ENCODE measurements at regions of chr5 and their contacts with region 1.

Region 1: GRCh38 chr5:141524604-141525597 is 36.0 kb downstream of the PCDHGC5 start:
- DNase-seq: peak; percentile 88
- ATAC-seq: peak; percentile 53
- H3K4me3 ChIP-seq: no peak overlapping the region
- H3K27ac ChIP-seq: peak overlapping the region; percentile 25; the same call in 1 of the 2 replicates
- H3K4me1 ChIP-seq: peaks cover 40% of the 10 kb centered on the region
- H3K27me3 ChIP-seq: no peaks in the 10 kb centered on the region
- CTCF ChIP-seq: peak; percentile 98

Region 2: DNA sequence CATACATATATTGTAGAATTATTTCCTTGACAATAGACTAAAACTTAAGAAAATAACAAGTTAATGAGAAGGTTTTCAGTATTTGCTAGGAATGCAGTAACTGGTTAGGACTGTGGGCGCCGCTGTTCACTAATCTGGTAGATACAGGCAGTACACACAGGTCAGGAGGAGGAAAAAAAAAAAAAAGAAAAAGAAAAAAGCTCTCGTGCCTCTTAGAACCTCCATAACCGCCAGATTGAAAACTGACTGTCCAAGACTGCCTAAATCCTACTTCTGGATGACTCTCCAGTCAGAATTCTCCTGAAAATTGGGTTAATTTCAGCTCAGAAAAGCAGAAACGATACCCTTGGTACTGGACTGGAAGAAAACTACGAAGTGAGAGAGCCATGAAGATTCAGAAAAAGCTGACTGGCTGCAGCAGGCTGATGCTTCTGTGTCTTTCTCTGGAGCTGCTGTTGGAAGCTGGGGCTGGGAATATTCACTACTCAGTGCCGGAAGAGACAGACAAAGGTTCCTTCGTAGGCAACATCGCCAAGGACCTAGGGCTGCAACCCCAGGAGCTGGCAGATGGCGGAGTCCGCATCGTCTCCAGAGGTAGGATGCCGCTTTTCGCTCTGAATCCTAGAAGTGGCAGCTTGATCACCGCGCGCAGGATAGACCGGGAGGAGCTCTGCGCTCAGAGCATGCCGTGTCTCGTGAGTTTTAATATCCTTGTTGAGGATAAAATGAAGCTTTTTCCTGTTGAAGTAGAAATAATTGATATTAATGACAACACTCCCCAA is 194.4 kb before region 1 on chr5 and contains the start of gene PCDHGA1:
- CTCF ChIA-PET with region 1: interaction called, 4 read pairs
- POLR2A ChIA-PET with region 1: no interaction called
- intact Hi-C with region 1: loop called (anchors 1 kb)
- DNase-seq: peak; percentile 26
- ATAC-seq: peak; percentile 67
- H3K4me3 ChIP-seq: peak within 1 kb of the TSS; percentile 43
- H3K27ac ChIP-seq: no peak within 1 kb of the TSS
- H3K4me1 ChIP-seq: no peaks in the 10 kb centered on the region
- H3K27me3 ChIP-seq: no peaks in the 10 kb centered on the region
- CTCF ChIP-seq: peak; percentile 49
- total RNA-seq, gene PCDHGA1: 0.04 and 0.06 TPM in 2 replicates

Region 3: DNA sequence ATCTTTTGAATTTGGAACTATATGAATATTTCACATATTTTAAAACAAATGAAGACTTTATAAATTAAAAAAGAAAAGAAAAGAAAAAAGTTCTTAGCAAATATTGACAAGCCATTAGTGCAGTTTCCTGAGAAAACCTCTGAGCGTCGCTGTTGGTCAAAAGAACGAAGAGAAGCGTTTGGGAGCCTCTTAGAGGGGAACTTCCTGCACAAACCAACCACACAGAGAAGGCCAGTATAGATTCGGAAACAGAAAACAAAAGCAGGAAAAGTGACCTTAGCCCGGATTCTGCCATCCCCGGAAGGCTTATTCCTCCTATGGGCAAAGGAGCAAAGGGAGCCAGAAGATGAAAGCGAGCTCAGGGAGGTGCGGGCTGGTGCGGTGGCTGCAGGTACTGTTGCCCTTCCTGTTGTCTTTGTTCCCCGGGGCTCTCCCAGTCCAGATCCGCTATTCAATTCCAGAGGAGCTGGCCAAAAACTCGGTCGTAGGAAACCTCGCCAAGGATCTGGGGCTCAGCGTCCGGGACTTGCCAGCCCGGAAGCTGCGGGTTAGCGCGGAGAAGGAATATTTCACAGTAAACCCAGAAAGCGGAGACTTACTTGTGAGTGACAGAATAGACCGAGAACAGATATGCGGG is 165.0 kb before region 1 on chr5 and contains the start of gene PCDHGB2:
- CTCF ChIA-PET with region 1: interaction called, 5 read pairs
- POLR2A ChIA-PET with region 1: no interaction called
- intact Hi-C with region 1: loop called (anchors 1 kb)
- DNase-seq: peak; percentile 63
- ATAC-seq: peak; percentile 62
- H3K4me3 ChIP-seq: peak within 1 kb of the TSS; percentile 69
- H3K27ac ChIP-seq: 0 out of 2 replicates have a peak within 1 kb of the TSS, but pooled peaks have one; percentile 23
- H3K4me1 ChIP-seq: 0 out of 2 replicates have a peak, but pooled peaks cover 3% of the 10 kb centered on the region
- H3K27me3 ChIP-seq: no peaks in the 10 kb centered on the region
- CTCF ChIP-seq: peak; percentile 67; the same call in 1 of the 2 replicates
- total RNA-seq, gene PCDHGB2: 1.4 and 2.2 TPM in 2 replicates

Region 4: DNA sequence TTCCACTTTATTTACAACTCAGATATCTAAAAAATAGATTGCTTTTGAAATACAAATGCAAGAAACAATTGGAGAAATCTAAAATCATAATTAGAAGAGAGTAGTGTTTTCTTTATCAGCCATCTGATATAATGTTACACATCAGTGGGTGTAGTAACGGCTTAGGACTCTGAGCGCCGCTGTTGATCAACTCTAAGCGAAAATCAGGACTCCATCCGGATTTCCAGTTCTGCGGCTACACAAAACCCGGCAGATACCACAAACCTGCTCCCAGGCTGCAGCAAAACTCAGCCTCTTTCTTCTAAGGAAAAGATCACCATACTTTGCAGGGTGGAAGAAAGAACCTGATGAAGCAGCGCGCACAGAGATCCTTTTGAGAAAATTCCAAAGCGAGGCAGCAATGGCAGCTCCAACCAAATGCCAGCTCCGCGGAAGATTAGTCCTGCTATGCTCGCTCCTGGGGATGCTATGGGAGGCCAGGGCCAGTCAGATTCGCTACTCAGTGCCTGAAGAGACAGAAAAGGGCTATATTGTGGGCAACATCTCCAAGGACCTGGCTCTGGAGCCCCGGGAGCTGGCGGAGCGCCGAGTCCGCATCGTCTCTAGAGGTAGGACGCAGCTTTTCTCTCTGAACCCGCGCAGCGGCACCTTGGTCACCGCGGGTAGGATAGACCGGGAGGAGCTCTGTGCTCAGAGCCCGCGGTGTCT is 122.2 kb before region 1 on chr5 and contains the start of gene PCDHGA9:
- CTCF ChIA-PET with region 1: interaction called, 7 read pairs
- POLR2A ChIA-PET with region 1: no interaction called
- intact Hi-C with region 1: loop called (anchors 1 kb)
- DNase-seq: no peak
- ATAC-seq: no peak
- H3K4me3 ChIP-seq: no peak within 1 kb of the TSS
- H3K27ac ChIP-seq: no peak within 1 kb of the TSS
- H3K4me1 ChIP-seq: no peaks in the 10 kb centered on the region
- H3K27me3 ChIP-seq: no peaks in the 10 kb centered on the region
- CTCF ChIP-seq: no peak
- total RNA-seq, gene PCDHGA9: 1.9 and 2.9 TPM in 2 replicates

Region 5: GRCh38 chr5:141431286-141431685 is 93.6 kb before region 1 on chr5:
- CTCF ChIA-PET with region 1: no interaction called
- POLR2A ChIA-PET with region 1: no interaction called
- intact Hi-C with region 1: no loop called
- DNase-seq: no peak
- ATAC-seq: no peak
- H3K4me3 ChIP-seq: no peak overlapping the region
- H3K27ac ChIP-seq: no peak overlapping the region
- H3K4me1 ChIP-seq: no peaks in the 10 kb centered on the region
- H3K27me3 ChIP-seq: no peaks in the 10 kb centered on the region
- CTCF ChIP-seq: no peak

Region 6: GRCh38 chr5:141488591-141489561 is 36.0 kb before region 1 on chr5 and contains the start of gene PCDHGC5:
- CTCF ChIA-PET with region 1: no interaction called
- POLR2A ChIA-PET with region 1: no interaction called
- intact Hi-C with region 1: loop called (anchors 2 kb)
- DNase-seq: peak; percentile 71
- ATAC-seq: peak; percentile 84
- H3K4me3 ChIP-seq: peak within 1 kb of the TSS; percentile 42; the same call in 1 of the 2 replicates
- H3K27ac ChIP-seq: peak within 1 kb of the TSS; percentile 66
- H3K4me1 ChIP-seq: peaks cover 15% of the 10 kb centered on the region; the same call in 1 of the 2 replicates
- H3K27me3 ChIP-seq: no peaks in the 10 kb centered on the region
- CTCF ChIP-seq: no peak
- total RNA-seq, gene PCDHGC5: 0.40 and 0.46 TPM in 2 replicates

Region 7: GRCh38 chr5:141508798-141509611 is 15.9 kb before region 1 on chr5:
- CTCF ChIA-PET with region 1: interaction called, 6 read pairs
- POLR2A ChIA-PET with region 1: interaction called, 5 read pairs
- intact Hi-C with region 1: loop called (anchors 1 kb)
- DNase-seq: peak; percentile 79
- ATAC-seq: peak; percentile 88
- H3K4me3 ChIP-seq: peak overlapping the region; percentile 57; the same call in 1 of the 2 replicates
- H3K27ac ChIP-seq: peak overlapping the region; percentile 76
- H3K4me1 ChIP-seq: peaks cover 13% of the 10 kb centered on the region; the same call in 1 of the 2 replicates
- H3K27me3 ChIP-seq: no peaks in the 10 kb centered on the region
- CTCF ChIP-seq: no peak

Region 8: DNA sequence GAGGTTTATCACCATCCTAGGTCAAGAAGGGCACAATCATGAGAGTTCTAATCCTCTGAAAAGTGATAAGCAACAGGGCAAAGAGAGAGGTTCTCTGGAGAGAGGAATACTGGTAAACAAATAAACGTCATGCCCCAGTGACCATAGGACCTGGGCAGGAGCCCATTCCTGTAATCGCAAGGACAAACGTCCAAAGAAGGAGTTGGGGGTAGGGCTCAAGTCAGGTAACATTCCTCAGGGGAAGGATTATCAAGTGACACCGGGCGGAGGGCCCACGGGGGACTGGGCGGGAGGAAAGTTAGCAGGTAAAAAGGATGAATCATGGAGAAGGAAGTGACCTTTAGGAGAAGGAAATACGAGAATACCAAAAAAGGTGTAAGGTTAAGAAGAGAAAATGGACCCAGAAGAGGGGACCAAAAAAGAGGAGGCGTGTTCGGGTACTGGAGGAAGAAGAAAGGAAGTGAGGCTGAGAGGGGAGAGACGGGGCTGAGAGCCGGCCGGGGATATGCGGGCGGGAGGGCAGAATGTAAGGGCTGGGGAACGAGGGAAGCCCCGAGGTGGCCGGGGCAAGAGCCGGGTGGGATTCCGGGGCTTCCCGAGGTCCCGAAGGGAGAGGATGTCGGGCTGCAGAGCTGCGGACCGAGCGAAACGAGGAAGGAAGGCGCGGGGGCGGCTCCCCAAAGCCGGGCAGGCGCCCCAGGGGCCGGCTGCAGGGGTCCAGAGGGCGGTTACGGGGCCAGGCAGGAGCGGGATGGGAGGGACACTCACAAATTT is 93.3 kb after region 1 on chr5:
- CTCF ChIA-PET with region 1: no interaction called
- POLR2A ChIA-PET with region 1: no interaction called
- intact Hi-C with region 1: no loop called
- DNase-seq: peak; percentile 76
- ATAC-seq: peak; percentile 25
- H3K4me3 ChIP-seq: peak overlapping the region; percentile 95
- H3K27ac ChIP-seq: peak overlapping the region; percentile 86
- H3K4me1 ChIP-seq: peaks cover 17% of the 10 kb centered on the region; the same call in 1 of the 2 replicates
- H3K27me3 ChIP-seq: no peaks in the 10 kb centered on the region
- CTCF ChIP-seq: no peak